AG04449 (cell line): ENCODE measurements at regions of chr12 and their contacts with region 1.

Region 1: DNA sequence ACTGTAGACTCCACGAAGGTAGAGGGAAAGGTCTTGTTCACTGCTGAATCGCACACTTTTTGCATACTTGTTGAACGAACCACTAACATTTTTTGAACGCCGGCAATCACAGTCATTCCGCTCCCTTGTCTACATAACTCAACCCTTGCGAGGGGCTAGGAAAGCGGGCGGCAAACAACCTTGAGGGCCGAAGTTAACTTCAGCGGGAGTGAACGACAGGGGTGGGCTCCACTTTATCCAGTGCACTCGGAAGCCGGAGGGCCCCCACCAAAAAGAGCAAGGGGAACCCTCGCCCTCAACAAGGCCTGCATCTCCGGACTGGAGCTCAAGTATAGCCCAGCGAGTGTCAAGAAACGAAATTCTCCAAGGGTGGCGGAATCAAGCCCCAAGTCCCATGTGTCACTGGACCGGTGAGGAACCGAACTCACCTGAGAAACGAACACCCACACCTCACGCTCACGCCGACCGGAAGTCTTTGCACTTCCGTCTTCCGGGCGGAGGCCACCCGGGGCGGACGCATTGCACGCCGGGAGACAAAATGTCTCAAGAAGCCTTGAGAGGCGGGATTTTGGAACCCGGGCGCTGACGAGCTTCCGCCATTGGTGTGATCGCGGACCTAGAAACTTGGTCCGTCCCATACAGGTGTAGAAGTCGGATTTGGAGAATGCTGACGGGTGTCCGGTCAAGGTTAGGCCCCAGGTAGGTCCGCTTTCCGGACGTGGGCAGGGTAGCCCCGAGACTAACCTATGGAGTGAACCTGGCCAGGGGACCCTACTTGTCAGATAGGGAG is at the start of gene LLPH:
- DNase-seq: peak; percentile 33
- H3K4me3 ChIP-seq: peak within 1 kb of the TSS; percentile 95
- CTCF ChIP-seq: no peak

Region 2: GRCh38 chr12:66144791-66145754 is 14.6 kb after region 1 on chr12:
- CTCF ChIA-PET with region 1: interaction called, 15 read pairs
- POLR2A ChIA-PET with region 1: no interaction called
- DNase-seq: no peak
- H3K4me3 ChIP-seq: no peak overlapping the region
- CTCF ChIP-seq: peak; percentile 32

Region 3: GRCh38 chr12:66169221-66170170 is 39.0 kb after region 1 on chr12 and contains the start of gene TMBIM4:
- CTCF ChIA-PET with region 1: interaction called, 12 read pairs
- POLR2A ChIA-PET with region 1: interaction called, 11 read pairs
- DNase-seq: peak; percentile 65
- H3K4me3 ChIP-seq: peak within 1 kb of the TSS; percentile 88
- CTCF ChIP-seq: peak; percentile 61

Region 4: DNA sequence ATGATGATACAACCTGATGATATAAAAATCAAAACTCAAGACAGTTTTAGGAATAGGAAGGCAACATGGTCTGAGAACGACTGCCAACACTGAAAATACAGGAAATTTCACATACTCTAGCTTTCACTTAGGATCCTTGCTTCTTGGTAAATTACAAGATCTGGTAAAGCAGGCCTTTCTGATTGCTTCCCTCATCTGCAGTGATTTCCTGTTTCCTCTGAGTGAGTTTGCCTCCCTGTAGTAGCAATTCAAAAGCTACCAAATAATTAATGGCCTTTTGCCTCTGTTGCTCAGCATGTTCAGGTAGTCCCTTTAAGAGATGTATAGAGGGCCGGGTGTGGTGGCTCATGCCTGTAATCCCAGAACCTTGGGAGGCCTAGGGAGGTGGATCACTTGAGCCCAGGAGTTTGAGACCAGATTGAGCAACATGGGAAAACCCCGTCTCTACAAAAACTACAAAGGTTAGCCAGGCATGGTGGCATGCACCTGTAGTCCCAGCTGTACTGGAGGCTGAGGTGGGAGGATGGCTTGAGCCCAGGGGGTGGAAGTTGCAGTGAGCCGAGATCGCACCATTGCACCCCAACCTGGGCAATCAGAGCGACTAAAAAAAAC is 56.7 kb after region 1 on chr12:
- CTCF ChIA-PET with region 1: no interaction called
- POLR2A ChIA-PET with region 1: no interaction called
- DNase-seq: no peak
- H3K4me3 ChIP-seq: no peak overlapping the region
- CTCF ChIP-seq: no peak